ENCODE measurements at regions of chr14 and their contacts with region 1.

Region 1: GRCh38 chr14:69559581-69560011 is 15.1 kb downstream of the CCDC177 start:
- DNase-seq: peak; percentile 73
- H3K4me3 ChIP-seq: no peak overlapping the region
- H3K27ac ChIP-seq: peak overlapping the region in 1 of 2 experiments; percentile 76; a peak in 2 of 4 replicates
- H3K4me1 ChIP-seq: peaks cover 0 to 14% of the 10 kb centered on the region in 2 experiments; a peak in 1 of 4 replicates
- H3K27me3 ChIP-seq: peaks cover 26% of the 10 kb centered on the region; the same call in 1 of the 2 replicates
- CTCF ChIP-seq: no peak
- EP300 ChIP-seq: no peak
- RAD21 ChIP-seq: no peak

Region 2: GRCh38 chr14:69522026-69522425 is 37.6 kb before region 1 on chr14:
- CTCF ChIA-PET with region 1: no interaction called
- POLR2A ChIA-PET with region 1: no interaction called
- DNase-seq: no peak
- H3K4me3 ChIP-seq: no peak overlapping the region
- H3K27ac ChIP-seq: no peak overlapping the region
- H3K4me1 ChIP-seq: peaks cover 0 to 4% of the 10 kb centered on the region in 2 experiments; a peak in 1 of 4 replicates
- H3K27me3 ChIP-seq: peaks cover 3% of the 10 kb centered on the region; the same call in 1 of the 2 replicates
- CTCF ChIP-seq: no peak
- EP300 ChIP-seq: no peak
- RAD21 ChIP-seq: no peak

Region 3: DNA sequence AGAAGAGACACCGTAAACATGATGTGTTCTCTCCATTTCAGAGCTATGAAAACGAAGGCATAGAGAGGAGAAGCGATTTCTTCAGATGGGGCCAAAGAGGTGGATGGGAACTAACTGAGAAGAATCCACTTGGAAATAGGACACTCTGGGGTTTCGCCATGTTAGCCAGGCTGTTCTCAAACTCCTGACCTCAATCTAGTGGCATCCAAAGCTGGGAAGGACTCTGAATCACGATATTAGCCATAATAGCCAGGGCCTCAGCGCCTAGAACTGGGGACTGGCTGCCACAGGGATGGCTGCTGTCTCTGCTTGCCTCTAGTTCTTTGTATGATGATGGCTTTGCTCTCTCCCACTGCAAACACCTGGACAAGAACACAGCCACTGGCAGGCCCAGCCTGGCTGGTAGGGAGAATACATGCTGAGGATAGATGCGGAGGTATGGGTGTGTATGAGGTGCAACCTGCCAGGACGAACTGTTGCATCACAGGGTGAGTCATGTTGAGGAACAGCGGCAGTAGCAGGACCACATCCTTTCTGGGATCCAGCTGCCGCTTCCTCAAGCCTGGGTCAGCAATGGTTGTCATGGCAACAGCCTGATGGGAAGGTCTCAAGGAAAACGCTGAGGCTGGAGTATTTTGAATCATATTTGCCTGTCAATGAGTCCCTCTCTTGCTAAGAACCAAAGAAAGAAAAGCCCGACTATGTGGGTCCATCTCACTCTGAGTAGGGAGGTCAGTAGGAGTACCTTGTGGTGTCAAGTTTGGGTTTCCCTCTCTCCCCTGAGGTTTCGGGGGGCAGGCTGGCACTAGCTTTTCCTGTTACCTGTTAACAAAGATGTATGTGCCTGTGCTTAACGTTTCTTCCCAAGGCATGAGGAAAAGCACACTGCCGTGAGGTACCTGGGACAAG is 16.0 kb before region 1 on chr14:
- CTCF ChIA-PET with region 1: interaction called, 12 read pairs
- POLR2A ChIA-PET with region 1: no interaction called
- DNase-seq: no peak
- H3K4me3 ChIP-seq: no peak overlapping the region
- H3K27ac ChIP-seq: no peak overlapping the region
- H3K4me1 ChIP-seq: no peaks in the 10 kb centered on the region
- H3K27me3 ChIP-seq: no peaks in the 10 kb centered on the region
- CTCF ChIP-seq: no peak
- EP300 ChIP-seq: no peak
- RAD21 ChIP-seq: no peak

Region 4: DNA sequence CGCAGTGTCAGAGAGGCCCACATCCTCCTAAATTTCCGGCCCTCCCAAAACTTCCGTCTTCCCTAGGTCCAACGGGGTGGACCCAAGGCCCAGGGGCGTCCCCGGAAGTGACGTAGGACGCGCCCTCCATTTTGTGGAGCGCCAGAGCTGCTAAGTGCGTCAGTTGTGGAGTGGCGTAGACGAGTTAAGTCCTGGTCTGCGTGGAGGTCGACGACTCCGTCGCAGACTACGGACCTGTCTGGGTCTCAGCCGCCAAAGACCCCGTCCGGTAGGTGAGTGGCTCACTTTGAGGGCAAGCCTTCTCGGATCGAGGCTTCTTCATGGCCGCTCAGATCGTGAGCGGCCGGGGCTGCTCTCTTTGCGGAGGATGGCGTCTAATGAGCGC is 207.4 kb after region 1 on chr14 and contains the start of gene SRSF5:
- CTCF ChIA-PET with region 1: no interaction called
- POLR2A ChIA-PET with region 1: no interaction called
- DNase-seq: peak; percentile 94
- H3K4me3 ChIP-seq: peak within 1 kb of the TSS; percentile 97 to 100
- H3K27ac ChIP-seq: peak within 1 kb of the TSS; percentile 98
- H3K4me1 ChIP-seq: peaks cover 7 to 23% of the 10 kb centered on the region in 2 experiments; a peak in 3 of 4 replicates
- H3K27me3 ChIP-seq: no peaks in the 10 kb centered on the region
- CTCF ChIP-seq: no peak
- EP300 ChIP-seq: peak in 1 of 2 experiments; percentile 41; a peak in 2 of 4 replicates
- RAD21 ChIP-seq: no peak
- polyA plus RNA-seq, gene SRSF5: 324 and 395 TPM in 2 replicates

Measured in SK-N-SH (cell line).